A549 (cell line): ENCODE measurements at regions of chr17 and their contacts with region 1.

Region 1: GRCh38 chr17:29807520-29808351 is 122.3 kb downstream of the SSH2 start:
- DNase-seq: peak; percentile 72 to 73
- ATAC-seq: peak; percentile 90 to 94
- H3K4me3 ChIP-seq: peak overlapping the region; percentile 47
- H3K27ac ChIP-seq: peak overlapping the region; percentile 62 to 78
- H3K4me1 ChIP-seq: no peaks in the 10 kb centered on the region
- CTCF ChIP-seq: peak; percentile 99
- EP300 ChIP-seq: no peak
- POLR2A ChIP-seq: no peak
- RAD21 ChIP-seq: peak; percentile 92 to 93

Region 2: DNA sequence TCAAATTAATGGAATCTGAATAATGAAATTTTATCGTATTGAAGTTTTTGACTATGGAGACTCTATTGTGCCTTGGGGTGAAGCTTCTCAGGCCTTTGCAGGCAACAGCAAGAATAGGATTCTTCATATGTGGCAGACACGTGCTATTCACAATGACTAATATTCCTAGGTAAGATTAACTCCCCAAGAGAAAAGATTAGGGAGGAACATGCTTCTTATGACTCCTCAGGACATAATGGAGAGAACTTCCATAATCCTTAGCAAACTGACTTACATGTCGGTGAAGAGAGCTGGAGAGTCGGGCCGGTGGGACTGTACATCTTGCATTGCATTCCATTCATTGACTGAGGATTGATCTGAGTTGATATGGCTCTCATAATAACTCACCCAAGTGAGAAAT is 136.1 kb before region 1 on chr17:
- CTCF ChIA-PET with region 1: no interaction called
- POLR2A ChIA-PET with region 1: no interaction called
- DNase-seq: no peak
- ATAC-seq: no peak
- H3K4me3 ChIP-seq: no peak overlapping the region
- H3K27ac ChIP-seq: no peak overlapping the region
- H3K4me1 ChIP-seq: 0 out of 3 replicates have a peak, but pooled peaks cover 3% of the 10 kb centered on the region
- CTCF ChIP-seq: no peak
- EP300 ChIP-seq: no peak
- POLR2A ChIP-seq: no peak
- RAD21 ChIP-seq: no peak

Region 3: DNA sequence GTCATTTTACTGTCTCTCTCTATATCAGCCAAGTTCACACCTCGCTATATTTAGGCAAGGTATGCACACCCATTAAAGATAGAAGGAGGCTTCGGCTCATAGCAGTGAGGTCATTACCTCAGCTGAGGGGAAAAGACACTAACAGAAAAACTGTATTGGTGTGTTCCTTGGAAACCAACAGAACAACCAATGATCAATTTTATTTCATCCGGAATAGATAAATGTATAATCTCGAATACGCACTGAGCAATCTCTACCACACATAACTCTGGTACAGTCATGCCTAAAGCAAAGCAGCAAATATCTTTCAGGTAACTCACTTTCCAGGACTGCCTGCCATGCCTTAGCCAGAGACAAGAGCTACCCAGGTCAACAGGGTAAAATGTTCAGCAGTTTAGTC is 75.1 kb before region 1 on chr17:
- CTCF ChIA-PET with region 1: no interaction called
- POLR2A ChIA-PET with region 1: no interaction called
- DNase-seq: peak in 1 of 2 experiments; percentile 49
- ATAC-seq: peak; percentile 93 to 96
- H3K4me3 ChIP-seq: no peak overlapping the region
- H3K27ac ChIP-seq: peak overlapping the region in 1 of 2 experiments; percentile 46; a peak in 3 of 6 replicates
- H3K4me1 ChIP-seq: peaks cover 41% of the 10 kb centered on the region
- CTCF ChIP-seq: no peak
- EP300 ChIP-seq: no peak
- POLR2A ChIP-seq: no peak
- RAD21 ChIP-seq: no peak

Region 4: GRCh38 chr17:29789196-29790170 is 18.3 kb before region 1 on chr17:
- CTCF ChIA-PET with region 1: interaction called, 23 read pairs
- POLR2A ChIA-PET with region 1: no interaction called
- DNase-seq: no peak
- ATAC-seq: peak in 1 of 2 experiments; percentile 37; a peak in 1 of 6 replicates
- H3K4me3 ChIP-seq: no peak overlapping the region
- H3K27ac ChIP-seq: no peak overlapping the region
- H3K4me1 ChIP-seq: peaks cover 24% of the 10 kb centered on the region
- CTCF ChIP-seq: no peak
- EP300 ChIP-seq: no peak
- POLR2A ChIP-seq: no peak
- RAD21 ChIP-seq: no peak

Region 5: GRCh38 chr17:29826114-29826692 is 18.5 kb after region 1 on chr17:
- CTCF ChIA-PET with region 1: interaction called, 40 read pairs
- POLR2A ChIA-PET with region 1: no interaction called
- DNase-seq: no peak
- ATAC-seq: no peak
- H3K4me3 ChIP-seq: no peak overlapping the region
- H3K27ac ChIP-seq: no peak overlapping the region
- H3K4me1 ChIP-seq: no peaks in the 10 kb centered on the region
- CTCF ChIP-seq: no peak
- EP300 ChIP-seq: no peak
- POLR2A ChIP-seq: no peak
- RAD21 ChIP-seq: no peak

Region 6: DNA sequence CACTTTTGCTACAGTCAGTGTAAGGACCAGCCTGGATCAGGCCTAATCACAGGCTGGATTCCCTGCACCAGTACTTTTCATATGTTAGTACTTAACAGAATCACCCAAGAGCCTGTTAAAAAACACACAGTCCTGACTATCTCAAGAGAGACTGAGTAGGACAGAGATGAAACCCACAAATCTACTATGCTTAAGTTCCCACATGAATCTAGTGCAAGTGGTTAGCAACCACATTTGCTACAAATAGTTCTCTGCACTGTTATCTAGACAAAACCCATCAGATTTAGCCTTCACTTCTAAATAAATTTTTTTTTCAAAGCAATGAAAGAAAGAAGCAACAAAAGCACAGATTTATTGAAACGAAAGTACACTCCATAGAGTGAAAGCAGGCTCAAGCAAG is 83.4 kb after region 1 on chr17:
- CTCF ChIA-PET with region 1: interaction called, 10 read pairs
- POLR2A ChIA-PET with region 1: no interaction called
- DNase-seq: no peak
- ATAC-seq: no peak
- H3K4me3 ChIP-seq: no peak overlapping the region
- H3K27ac ChIP-seq: no peak overlapping the region
- H3K4me1 ChIP-seq: no peaks in the 10 kb centered on the region; the same call in 2 of the 3 replicates
- CTCF ChIP-seq: no peak
- EP300 ChIP-seq: no peak
- POLR2A ChIP-seq: no peak
- RAD21 ChIP-seq: no peak

Region 7: DNA sequence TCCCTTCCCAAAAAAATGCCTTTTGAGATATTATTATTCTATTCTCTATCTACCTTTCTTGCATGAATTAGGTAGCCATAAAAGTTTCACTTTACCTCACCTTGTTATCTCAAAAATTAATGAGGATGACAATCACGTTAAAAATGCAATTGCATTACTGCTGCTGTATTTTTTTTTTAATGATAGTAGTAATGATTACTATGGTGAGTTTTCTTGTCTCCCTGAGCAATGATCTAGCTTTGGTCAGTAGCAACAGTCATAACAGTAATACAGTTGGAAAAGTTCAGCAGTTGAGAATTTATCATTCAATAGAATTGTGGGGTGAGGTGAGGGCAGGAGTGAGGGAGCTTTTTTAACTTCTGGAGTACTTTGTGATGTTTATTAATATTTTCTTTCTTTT is 133.6 kb after region 1 on chr17 and contains the start of gene EFCAB5:
- CTCF ChIA-PET with region 1: interaction called, 29 read pairs
- POLR2A ChIA-PET with region 1: no interaction called
- DNase-seq: no peak
- ATAC-seq: no peak
- H3K4me3 ChIP-seq: no peak within 1 kb of the TSS
- H3K27ac ChIP-seq: no peak within 1 kb of the TSS
- H3K4me1 ChIP-seq: no peaks in the 10 kb centered on the region
- CTCF ChIP-seq: no peak
- EP300 ChIP-seq: no peak
- POLR2A ChIP-seq: no peak
- RAD21 ChIP-seq: no peak
- polyA plus RNA-seq, gene EFCAB5: 0.36 and 0.65 TPM in 2 replicates

Region 8: DNA sequence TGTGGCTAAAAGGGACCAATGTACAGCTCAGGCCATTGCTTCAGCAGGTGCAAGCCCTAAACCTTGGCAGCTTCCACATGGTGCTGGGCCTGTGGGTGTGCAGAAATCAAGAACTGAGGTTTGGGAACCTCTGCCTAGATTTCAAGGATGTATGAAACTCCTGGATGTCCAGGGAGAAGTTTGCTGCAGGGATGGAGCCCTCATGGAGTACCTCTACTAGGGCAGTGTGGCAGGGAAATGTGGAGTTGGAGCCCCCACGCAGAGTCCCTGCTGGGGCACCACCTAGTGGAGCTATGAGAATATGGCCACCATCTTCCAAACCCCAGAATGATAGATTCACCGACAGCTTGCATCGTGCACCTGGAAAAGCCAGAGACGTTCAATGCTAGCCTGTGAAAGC is 146.7 kb after region 1 on chr17:
- CTCF ChIA-PET with region 1: no interaction called
- POLR2A ChIA-PET with region 1: no interaction called
- DNase-seq: no peak
- ATAC-seq: no peak
- H3K4me3 ChIP-seq: no peak overlapping the region
- H3K27ac ChIP-seq: no peak overlapping the region
- H3K4me1 ChIP-seq: peaks cover 10% of the 10 kb centered on the region
- CTCF ChIP-seq: no peak
- EP300 ChIP-seq: no peak
- POLR2A ChIP-seq: no peak
- RAD21 ChIP-seq: 0 out of 5 replicates have a peak, but pooled peaks of 1 of the 2 experiments have one; percentile 11

Region 9: DNA sequence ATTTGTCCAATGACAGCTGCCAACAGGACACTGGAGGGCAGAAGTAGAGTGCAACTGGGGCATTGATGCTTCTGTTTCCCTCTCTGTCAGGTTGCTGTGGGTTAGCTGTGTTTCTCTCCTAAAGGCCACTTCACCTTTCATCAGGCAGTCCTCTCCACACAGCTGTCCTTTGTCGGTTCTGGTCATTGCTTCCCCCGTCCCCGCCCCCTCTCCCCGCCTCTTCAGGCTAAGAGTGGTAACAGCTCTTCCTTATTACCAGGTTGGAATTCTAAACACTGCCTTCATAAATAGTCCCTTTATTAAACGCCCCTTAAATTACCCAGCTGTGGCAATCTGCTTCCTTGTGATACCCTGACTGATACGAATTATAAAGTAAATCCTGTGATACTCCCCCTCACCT is 277.1 kb after region 1 on chr17:
- CTCF ChIA-PET with region 1: interaction called, 6 read pairs
- POLR2A ChIA-PET with region 1: interaction called, 14 read pairs
- DNase-seq: no peak
- ATAC-seq: peak in 1 of 2 experiments; percentile 11; a peak in 2 of 6 replicates
- H3K4me3 ChIP-seq: no peak overlapping the region
- H3K27ac ChIP-seq: no peak overlapping the region
- H3K4me1 ChIP-seq: no peaks in the 10 kb centered on the region
- CTCF ChIP-seq: no peak
- EP300 ChIP-seq: no peak
- POLR2A ChIP-seq: no peak
- RAD21 ChIP-seq: no peak